HepG2 (cell line): ENCODE measurements at regions of chr6 and their contacts with region 1.

Region 1: GRCh38 chr6:126804332-126805064 is 314.0 kb upstream of the RSPO3 start:
- DNase-seq: peak; percentile 51
- ATAC-seq: peak; percentile 95
- H3K4me3 ChIP-seq: no peak overlapping the region
- H3K27ac ChIP-seq: no peak overlapping the region
- H3K4me1 ChIP-seq: no peaks in the 10 kb centered on the region
- H3K27me3 ChIP-seq: no peaks in the 10 kb centered on the region
- CTCF ChIP-seq: peak; percentile 75
- EP300 ChIP-seq: no peak
- POLR2A ChIP-seq: no peak
- RAD21 ChIP-seq: peak; percentile 35; the same call in 1 of the 2 replicates

Region 2: GRCh38 chr6:127069659-127070279 is 265.3 kb after region 1 on chr6:
- CTCF ChIA-PET with region 1: interaction called, 11 read pairs
- POLR2A ChIA-PET with region 1: no interaction called
- in situ Hi-C with region 1: no loop called
- intact Hi-C with region 1: loop called (anchors 1 kb)
- DNase-seq: peak; percentile 39
- ATAC-seq: peak; percentile 96
- H3K4me3 ChIP-seq: no peak overlapping the region
- H3K27ac ChIP-seq: no peak overlapping the region
- H3K4me1 ChIP-seq: no peaks in the 10 kb centered on the region
- H3K27me3 ChIP-seq: no peaks in the 10 kb centered on the region
- CTCF ChIP-seq: peak; percentile 57
- EP300 ChIP-seq: no peak
- POLR2A ChIP-seq: no peak
- RAD21 ChIP-seq: no peak

Region 3: DNA sequence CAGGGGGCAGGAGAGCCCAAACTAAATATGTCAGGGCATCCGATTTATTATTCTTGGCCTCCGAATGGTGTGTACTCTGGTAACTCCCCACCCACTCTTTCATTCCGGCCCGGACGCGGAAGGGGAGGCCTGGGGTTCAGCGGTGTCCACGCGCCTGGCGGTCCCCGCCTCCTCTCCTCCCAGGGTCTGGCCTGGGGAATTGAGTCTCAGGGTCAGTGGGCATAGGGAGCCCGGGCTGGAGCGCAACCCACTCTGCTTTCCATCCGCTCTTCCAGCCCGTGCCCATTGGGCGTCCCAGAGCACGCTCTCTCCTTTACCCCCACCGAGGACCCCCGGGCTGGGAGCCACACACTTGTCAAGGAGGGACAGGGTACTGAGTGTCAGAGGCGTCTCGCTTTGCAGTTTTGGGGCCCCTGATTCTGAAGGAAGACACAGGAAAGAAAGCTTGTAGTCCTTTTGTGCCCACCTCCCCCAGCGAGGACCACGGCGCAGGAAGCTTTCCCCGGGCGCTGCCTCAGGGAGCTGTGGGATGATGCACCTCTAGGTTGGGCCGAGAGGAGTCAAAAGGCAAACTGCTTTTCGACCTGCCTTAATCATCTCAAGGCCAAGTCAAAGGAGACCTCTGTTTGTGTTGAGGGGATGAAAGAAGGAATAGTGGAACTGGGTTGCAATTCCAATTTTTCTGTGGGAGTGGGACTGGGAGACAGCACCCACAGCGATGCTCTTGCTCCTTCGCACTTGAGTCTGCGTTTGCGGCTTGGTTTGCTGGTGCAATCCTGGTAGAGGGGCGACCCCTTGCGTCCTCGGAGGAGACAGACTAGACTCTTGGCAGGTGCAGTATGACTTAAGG is 316.5 kb after region 1 on chr6:
- CTCF ChIA-PET with region 1: interaction called, 12 read pairs
- POLR2A ChIA-PET with region 1: no interaction called
- in situ Hi-C with region 1: loop called (anchors 25 kb)
- intact Hi-C with region 1: loop called (anchors 1 kb)
- DNase-seq: peak; percentile 63
- ATAC-seq: peak; percentile 86
- H3K4me3 ChIP-seq: no peak overlapping the region
- H3K27ac ChIP-seq: no peak overlapping the region
- H3K4me1 ChIP-seq: no peaks in the 10 kb centered on the region
- H3K27me3 ChIP-seq: peaks cover 14 to 43% of the 10 kb centered on the region in 2 experiments; a peak in 4 of 5 replicates
- CTCF ChIP-seq: peak; percentile 95
- EP300 ChIP-seq: no peak
- POLR2A ChIP-seq: no peak
- RAD21 ChIP-seq: peak; percentile 82